AG04450 (cell line): ENCODE measurements at regions of chr3 and their contacts with region 1.

Region 1: GRCh38 chr3:39447637-39448483 is 19.6 kb upstream of the MOBP start:
- DNase-seq: peak; percentile 80
- H3K4me3 ChIP-seq: no peak overlapping the region
- H3K27ac ChIP-seq: no peak overlapping the region
- H3K27me3 ChIP-seq: peaks cover 6% of the 10 kb centered on the region
- CTCF ChIP-seq: peak; percentile 90

Region 2: DNA sequence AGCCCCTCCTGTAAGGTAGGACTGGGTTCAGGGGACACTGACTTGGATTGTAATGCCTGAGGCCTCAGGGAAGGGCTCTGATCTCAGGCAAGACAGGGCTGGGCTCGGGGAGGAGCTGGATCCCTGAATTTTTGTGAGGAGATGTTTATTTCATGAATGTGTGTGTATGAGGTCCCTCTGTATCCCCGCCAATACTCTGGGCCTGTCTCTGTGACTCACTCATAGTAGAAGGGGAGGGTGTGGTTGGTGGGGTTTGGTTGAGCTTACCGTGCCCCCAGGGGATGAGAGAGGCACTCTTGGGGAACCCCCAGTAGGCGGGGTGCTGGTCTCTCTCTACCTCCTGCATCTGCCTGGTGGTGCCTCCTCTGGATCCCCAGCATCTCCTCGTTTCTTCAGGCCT is 13.3 kb before region 1 on chr3:
- CTCF ChIA-PET with region 1: interaction called, 20 read pairs
- POLR2A ChIA-PET with region 1: no interaction called
- DNase-seq: no peak
- H3K4me3 ChIP-seq: no peak overlapping the region
- H3K27ac ChIP-seq: no peak overlapping the region
- H3K27me3 ChIP-seq: no peaks in the 10 kb centered on the region
- CTCF ChIP-seq: no peak

Region 3: DNA sequence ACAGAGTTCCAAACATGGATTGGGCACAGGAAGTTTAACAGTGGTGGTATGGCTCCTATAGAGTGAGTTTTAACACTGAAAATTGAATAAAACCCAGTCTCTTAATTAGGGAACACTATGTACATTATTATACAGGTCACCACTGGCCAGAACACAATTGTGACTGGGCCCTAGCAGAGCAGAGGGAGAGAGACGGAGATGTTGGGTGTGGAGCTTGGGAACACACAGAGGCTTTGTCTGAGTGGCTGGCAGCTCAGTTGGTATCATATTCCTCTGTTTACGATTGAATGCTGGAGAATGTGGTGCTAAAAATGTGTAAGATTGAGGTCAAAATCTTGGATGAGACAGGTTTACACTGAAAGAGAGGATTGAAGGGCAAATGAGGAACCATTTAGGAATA is 12.8 kb after region 1 on chr3:
- CTCF ChIA-PET with region 1: interaction called, 46 read pairs
- POLR2A ChIA-PET with region 1: no interaction called
- DNase-seq: no peak
- H3K4me3 ChIP-seq: no peak overlapping the region
- H3K27ac ChIP-seq: no peak overlapping the region
- H3K27me3 ChIP-seq: no peaks in the 10 kb centered on the region
- CTCF ChIP-seq: no peak

Region 4: DNA sequence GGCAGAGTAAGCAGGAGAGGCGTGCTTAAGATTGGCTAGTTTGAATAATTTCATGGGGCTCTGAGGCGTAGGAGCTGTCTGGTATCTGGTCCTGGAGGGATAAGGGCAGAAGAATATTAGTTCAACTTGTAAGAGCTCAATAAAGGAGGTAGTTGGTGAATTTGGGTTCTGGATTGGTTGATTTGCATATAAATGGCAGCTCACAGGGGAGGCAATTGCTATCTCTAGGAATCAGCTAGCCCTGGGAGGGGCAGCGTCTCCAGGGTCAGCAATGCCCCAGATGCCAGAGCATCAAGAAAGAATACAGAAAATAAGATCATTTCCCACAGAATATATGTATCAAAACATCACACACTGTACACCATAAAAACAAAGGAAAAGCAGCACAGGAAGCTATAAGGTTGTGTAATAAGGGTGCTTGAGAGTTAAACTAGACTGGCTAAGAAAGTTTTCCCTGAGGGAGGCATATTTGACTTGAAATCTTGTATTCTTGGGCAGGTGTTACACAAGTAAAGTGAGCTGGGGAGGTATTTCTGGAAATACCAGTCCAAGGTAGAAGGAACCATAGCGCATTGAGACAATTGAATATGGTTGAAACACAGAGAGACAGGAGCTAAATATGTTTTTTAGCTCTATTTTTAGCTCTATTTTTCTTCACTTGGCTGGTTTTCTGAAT is 25.7 kb after region 1 on chr3:
- CTCF ChIA-PET with region 1: interaction called, 15 read pairs
- POLR2A ChIA-PET with region 1: no interaction called
- DNase-seq: no peak
- H3K4me3 ChIP-seq: no peak overlapping the region
- H3K27ac ChIP-seq: no peak overlapping the region
- H3K27me3 ChIP-seq: no peaks in the 10 kb centered on the region
- CTCF ChIP-seq: no peak

Region 5: GRCh38 chr3:39499651-39500240 is 51.9 kb after region 1 on chr3:
- CTCF ChIA-PET with region 1: interaction called, 93 read pairs
- POLR2A ChIA-PET with region 1: no interaction called
- DNase-seq: no peak
- H3K4me3 ChIP-seq: no peak overlapping the region
- H3K27ac ChIP-seq: no peak overlapping the region
- H3K27me3 ChIP-seq: peaks cover 20% of the 10 kb centered on the region
- CTCF ChIP-seq: no peak

Region 6: DNA sequence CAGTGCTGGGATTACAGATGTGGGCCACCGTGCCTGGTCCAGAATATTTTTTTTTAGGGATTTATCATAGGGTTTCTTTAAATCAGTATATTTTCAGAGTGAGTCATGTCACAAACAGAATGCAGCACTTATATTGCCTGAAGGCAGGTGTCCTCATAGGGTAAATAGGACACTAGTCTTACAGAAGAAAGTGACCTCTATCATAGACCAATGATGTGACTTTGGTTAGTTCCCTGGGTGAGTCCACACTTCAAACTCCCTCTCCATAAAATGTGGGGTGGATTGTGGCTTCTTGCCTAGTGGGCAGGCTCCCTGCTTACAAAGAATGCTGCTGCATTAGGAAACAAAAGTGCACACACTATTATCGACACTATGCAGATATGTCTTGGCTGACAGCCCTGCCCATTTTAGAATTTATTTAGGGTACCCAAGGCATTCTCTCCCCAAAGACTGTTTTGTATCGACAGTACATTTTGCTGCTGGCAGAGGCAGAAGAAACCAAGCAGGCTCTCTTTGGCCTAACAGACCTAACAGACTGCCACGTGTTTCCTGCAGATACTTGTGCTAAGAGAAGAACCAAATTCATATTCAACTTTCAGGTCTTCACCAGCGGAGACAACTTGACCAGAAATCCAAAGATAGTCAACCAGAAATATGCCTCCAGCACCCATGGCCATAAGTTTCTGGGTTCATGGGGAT is 144.6 kb after region 1 on chr3:
- CTCF ChIA-PET with region 1: no interaction called
- POLR2A ChIA-PET with region 1: no interaction called
- DNase-seq: no peak
- H3K4me3 ChIP-seq: no peak overlapping the region
- H3K27ac ChIP-seq: no peak overlapping the region
- H3K27me3 ChIP-seq: no peaks in the 10 kb centered on the region
- CTCF ChIP-seq: no peak

Region 7: DNA sequence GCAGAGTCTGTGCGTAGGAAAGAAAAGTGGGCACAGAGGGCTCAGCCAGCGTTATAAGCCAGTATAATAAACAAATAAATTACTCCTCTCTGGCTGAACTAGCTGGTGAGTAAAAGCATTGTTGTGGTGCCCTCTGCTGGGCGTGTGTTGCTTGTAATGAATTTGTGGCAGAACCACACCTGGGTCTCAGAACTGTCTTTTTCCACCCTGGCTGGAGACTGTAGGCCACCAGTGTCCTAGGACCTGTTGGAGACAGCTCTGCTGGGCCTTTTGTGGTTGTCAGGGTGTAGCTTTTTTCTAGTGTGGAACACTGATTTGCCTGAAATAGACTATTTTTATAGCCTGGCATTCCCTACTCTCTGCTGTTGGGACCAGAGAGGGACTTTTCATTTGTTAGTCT is 731.2 kb after region 1 on chr3:
- CTCF ChIA-PET with region 1: interaction called, 10 read pairs
- POLR2A ChIA-PET with region 1: no interaction called
- DNase-seq: peak; percentile 27
- H3K4me3 ChIP-seq: no peak overlapping the region
- H3K27ac ChIP-seq: no peak overlapping the region
- H3K27me3 ChIP-seq: no peaks in the 10 kb centered on the region
- CTCF ChIP-seq: peak; percentile 77